ENCODE measurements at regions of chr18 and their contacts with region 1.

Region 1: GRCh38 chr18:24488824-24489493 is 28.5 kb downstream of the HRH4 start:
- DNase-seq: peak; percentile 37
- H3K4me3 Mint-ChIP-seq: no peak overlapping the region
- H3K27ac Mint-ChIP-seq: no peak overlapping the region
- H3K4me1 Mint-ChIP-seq: peaks cover 14% of the 10 kb centered on the region
- H3K27me3 Mint-ChIP-seq: peaks cover 46% of the 10 kb centered on the region
- CTCF ChIP-seq: peak; percentile 43

Region 2: GRCh38 chr18:24176727-24177416 is 312.1 kb before region 1 on chr18:
- CTCF ChIA-PET with region 1: interaction called, 16 read pairs
- intact Hi-C with region 1: no loop called
- DNase-seq: peak; percentile 81
- H3K4me3 Mint-ChIP-seq: no peak overlapping the region
- H3K27ac Mint-ChIP-seq: no peak overlapping the region
- H3K4me1 Mint-ChIP-seq: peaks cover 6% of the 10 kb centered on the region
- H3K27me3 Mint-ChIP-seq: no peaks in the 10 kb centered on the region
- CTCF ChIP-seq: peak; percentile 90

Region 3: GRCh38 chr18:24204904-24205303 is 284.1 kb before region 1 on chr18:
- CTCF ChIA-PET with region 1: no interaction called
- intact Hi-C with region 1: no loop called
- DNase-seq: no peak
- H3K4me3 Mint-ChIP-seq: no peak overlapping the region
- H3K27ac Mint-ChIP-seq: no peak overlapping the region
- H3K4me1 Mint-ChIP-seq: peaks cover 26% of the 10 kb centered on the region
- H3K27me3 Mint-ChIP-seq: no peaks in the 10 kb centered on the region
- CTCF ChIP-seq: no peak

Region 4: GRCh38 chr18:24362758-24363157 is 126.2 kb before region 1 on chr18:
- CTCF ChIA-PET with region 1: interaction called, 39 read pairs
- intact Hi-C with region 1: loop called (anchors 1 kb)
- DNase-seq: peak; percentile 45
- H3K4me3 Mint-ChIP-seq: no peak overlapping the region
- H3K27ac Mint-ChIP-seq: no peak overlapping the region
- H3K4me1 Mint-ChIP-seq: peaks cover 6% of the 10 kb centered on the region
- H3K27me3 Mint-ChIP-seq: no peaks in the 10 kb centered on the region
- CTCF ChIP-seq: no peak

Region 5: DNA sequence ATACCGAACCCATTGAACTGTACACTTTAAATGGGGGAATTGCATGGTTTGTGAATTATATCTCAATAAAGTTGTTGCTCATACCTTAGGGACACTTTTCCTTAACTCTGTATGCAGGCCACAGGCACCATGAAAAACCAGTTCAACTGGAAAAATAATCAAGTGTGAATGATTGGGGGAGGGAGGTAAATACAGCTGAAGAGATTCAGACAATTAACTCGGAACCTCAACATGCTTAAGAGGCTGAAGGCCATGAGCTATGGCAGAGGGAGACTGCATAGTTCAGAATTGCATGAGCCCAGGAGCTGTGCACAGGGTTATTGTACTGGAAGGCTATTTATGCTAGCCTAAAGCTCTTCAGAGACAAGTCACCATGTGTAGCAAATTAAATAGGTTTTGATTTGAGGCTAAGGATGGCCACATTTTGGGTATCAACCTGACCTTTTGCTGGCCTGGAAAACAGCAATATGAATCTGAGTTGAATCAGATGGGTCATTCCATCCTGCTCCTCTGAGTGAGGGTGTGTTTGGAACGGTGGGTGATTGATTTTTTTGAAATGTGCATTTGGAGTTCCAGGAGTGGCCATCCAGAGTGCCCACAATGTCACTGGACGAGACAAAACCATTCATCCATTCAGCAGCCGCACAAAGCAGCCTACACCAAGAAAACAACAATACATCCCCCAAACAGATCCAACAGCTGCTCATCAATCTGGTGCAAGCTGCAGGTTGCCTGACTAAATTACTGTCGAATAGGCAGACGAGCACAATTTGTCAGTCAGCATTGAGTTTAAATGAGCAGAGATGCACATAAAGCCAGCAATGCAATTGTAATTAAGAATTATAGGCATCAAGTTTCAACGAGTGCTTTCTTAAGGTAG is 13.9 kb after region 1 on chr18:
- CTCF ChIA-PET with region 1: interaction called, 10 read pairs
- intact Hi-C with region 1: no loop called
- DNase-seq: peak; percentile 24
- H3K4me3 Mint-ChIP-seq: no peak overlapping the region
- H3K27ac Mint-ChIP-seq: no peak overlapping the region
- H3K4me1 Mint-ChIP-seq: no peaks in the 10 kb centered on the region
- H3K27me3 Mint-ChIP-seq: peaks cover 12% of the 10 kb centered on the region
- CTCF ChIP-seq: no peak

Region 6: GRCh38 chr18:24582771-24583170 is 93.8 kb after region 1 on chr18:
- CTCF ChIA-PET with region 1: interaction called, 10 read pairs
- intact Hi-C with region 1: no loop called
- DNase-seq: no peak
- H3K4me3 Mint-ChIP-seq: no peak overlapping the region
- H3K27ac Mint-ChIP-seq: no peak overlapping the region
- H3K4me1 Mint-ChIP-seq: no peaks in the 10 kb centered on the region
- H3K27me3 Mint-ChIP-seq: peaks cover 94% of the 10 kb centered on the region
- CTCF ChIP-seq: no peak

Region 7: DNA sequence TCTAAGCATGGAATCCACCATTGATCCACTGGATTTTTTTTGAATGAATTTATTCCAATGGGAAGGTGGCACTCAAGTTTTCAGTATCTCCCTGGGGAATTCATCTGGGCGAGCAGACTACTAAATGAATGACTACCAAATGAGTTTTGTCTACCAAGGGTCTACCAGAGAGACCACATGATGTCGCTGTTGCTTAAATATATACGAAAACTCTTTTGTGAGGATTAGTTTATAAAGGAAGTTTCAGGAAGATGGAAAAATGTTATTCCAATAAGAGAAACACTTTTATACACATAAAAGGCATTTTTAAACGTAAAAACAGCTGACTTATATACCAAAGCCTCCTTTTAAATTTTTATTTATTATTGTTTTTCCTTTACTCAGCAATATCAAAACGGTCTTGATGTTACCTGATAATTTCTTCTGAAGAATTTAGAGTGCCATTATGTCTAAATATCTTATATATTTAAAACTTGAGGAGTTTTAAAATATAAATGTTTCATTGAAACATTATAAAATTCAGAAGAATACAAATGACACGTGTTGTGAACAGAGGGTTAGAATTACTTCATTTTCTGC is 111.2 kb after region 1 on chr18:
- CTCF ChIA-PET with region 1: no interaction called
- intact Hi-C with region 1: loop called (anchors 5 kb)
- DNase-seq: peak; percentile 22
- H3K4me3 Mint-ChIP-seq: no peak overlapping the region
- H3K27ac Mint-ChIP-seq: no peak overlapping the region
- H3K4me1 Mint-ChIP-seq: no peaks in the 10 kb centered on the region
- H3K27me3 Mint-ChIP-seq: peaks cover 92% of the 10 kb centered on the region
- CTCF ChIP-seq: peak; percentile 39

Region 8: DNA sequence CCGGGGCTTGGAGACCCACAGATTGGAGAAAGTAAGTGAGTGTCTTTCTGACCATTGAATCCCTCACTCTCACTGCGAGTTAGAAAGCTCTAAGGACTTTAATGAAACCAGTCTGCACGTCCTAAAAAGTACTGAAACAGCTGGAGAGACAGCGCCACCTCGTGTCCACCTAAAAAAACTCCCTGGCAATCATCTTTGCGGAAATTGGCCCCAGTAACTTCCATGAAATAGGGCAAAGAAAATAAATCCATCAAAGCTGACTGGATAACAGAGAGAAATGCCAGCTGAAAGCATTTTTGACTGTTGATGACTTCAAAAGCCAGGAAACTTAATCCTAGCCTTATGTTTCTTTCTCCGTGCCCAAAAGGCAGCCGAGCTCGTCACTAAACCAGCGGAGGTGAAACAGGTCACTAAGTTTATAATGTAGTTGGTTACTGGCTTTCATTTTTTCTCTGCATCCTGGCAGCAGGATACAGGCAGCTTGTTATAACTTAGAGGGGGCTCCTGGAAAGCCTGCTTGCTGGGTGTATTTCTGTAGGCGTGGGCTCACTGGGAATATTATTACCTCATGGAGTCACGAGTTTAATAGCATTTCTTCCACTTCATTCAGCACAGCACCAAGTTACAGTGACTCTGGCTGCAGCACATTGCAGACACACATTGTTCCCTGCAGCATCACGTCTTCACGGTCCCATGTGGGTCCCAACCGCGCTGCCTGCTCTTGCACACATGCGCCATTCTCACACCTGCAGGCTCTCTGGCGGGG is 238.0 kb after region 1 on chr18:
- CTCF ChIA-PET with region 1: interaction called, 6 read pairs
- intact Hi-C with region 1: loop called (anchors 2 kb)
- DNase-seq: peak; percentile 73
- H3K4me3 Mint-ChIP-seq: no peak overlapping the region
- H3K27ac Mint-ChIP-seq: no peak overlapping the region
- H3K4me1 Mint-ChIP-seq: no peaks in the 10 kb centered on the region
- H3K27me3 Mint-ChIP-seq: peaks cover 45% of the 10 kb centered on the region
- CTCF ChIP-seq: peak; percentile 73

Measured in Calu3 (cell line).